WTC11 (cell line): ENCODE measurements at regions of chr2 and their contacts with region 1.

Region 1: GRCh38 chr2:45778720-45779171 is 127.3 kb downstream of the PRKCE start:
- DNase-seq: peak; percentile 72
- ATAC-seq: peak; percentile 83
- H3K4me3 Mint-ChIP-seq: no peak overlapping the region
- H3K27ac Mint-ChIP-seq: no peak overlapping the region
- H3K4me1 Mint-ChIP-seq: peaks cover 15% of the 10 kb centered on the region
- H3K27me3 Mint-ChIP-seq: no peaks in the 10 kb centered on the region
- CTCF ChIP-seq: peak; percentile 78

Region 2: GRCh38 chr2:45289997-45290709 is 488.6 kb before region 1 on chr2:
- CTCF ChIA-PET with region 1: no interaction called
- POLR2A ChIA-PET with region 1: no interaction called
- DNase-seq: no peak
- ATAC-seq: no peak
- H3K4me3 Mint-ChIP-seq: no peak overlapping the region
- H3K27ac Mint-ChIP-seq: no peak overlapping the region
- H3K4me1 Mint-ChIP-seq: peaks cover 7% of the 10 kb centered on the region
- H3K27me3 Mint-ChIP-seq: peaks cover 5% of the 10 kb centered on the region
- CTCF ChIP-seq: no peak

Region 3: GRCh38 chr2:45554073-45554741 is 224.5 kb before region 1 on chr2:
- CTCF ChIA-PET with region 1: no interaction called
- POLR2A ChIA-PET with region 1: no interaction called
- DNase-seq: no peak
- ATAC-seq: peak; percentile 51
- H3K4me3 Mint-ChIP-seq: no peak overlapping the region
- H3K27ac Mint-ChIP-seq: peak overlapping the region; percentile 62
- H3K4me1 Mint-ChIP-seq: peaks cover 24% of the 10 kb centered on the region
- H3K27me3 Mint-ChIP-seq: no peaks in the 10 kb centered on the region
- CTCF ChIP-seq: no peak

Region 4: DNA sequence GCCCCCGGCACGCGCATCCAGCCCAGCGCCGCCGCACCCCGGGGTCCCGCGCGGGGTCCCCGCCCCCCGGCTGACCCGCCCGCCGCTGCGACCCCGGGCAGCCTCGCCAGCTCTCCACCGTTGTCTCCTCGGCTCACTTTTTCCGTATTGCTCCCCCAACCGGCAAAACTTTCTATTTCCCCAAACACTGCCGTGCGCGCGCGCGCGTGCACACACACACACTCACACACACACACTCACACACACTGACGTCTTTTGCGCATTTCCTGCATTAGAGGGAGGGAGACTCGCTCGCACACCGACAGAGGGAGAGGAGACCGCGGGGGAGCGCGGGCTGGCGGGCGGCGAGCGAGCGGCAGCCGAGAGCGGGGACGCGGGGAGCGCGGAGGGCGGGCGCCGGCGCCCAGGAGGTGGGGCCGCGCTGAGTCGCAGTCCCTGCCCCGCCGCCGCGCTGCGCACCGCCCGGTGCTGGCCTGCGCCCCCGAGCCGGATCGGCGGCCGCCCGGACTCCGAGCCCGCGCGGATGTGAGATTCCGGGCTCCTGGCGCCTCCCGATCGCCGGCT is 127.8 kb before region 1 on chr2:
- CTCF ChIA-PET with region 1: interaction called, 15 read pairs
- POLR2A ChIA-PET with region 1: no interaction called
- DNase-seq: peak; percentile 82
- ATAC-seq: peak; percentile 69
- H3K4me3 Mint-ChIP-seq: peak overlapping the region; percentile 98
- H3K27ac Mint-ChIP-seq: peak overlapping the region; percentile 63; the same call in 1 of the 2 replicates
- H3K4me1 Mint-ChIP-seq: peaks cover 16% of the 10 kb centered on the region
- H3K27me3 Mint-ChIP-seq: peaks cover 79% of the 10 kb centered on the region
- CTCF ChIP-seq: no peak

Region 5: GRCh38 chr2:45699032-45699658 is 79.6 kb before region 1 on chr2:
- CTCF ChIA-PET with region 1: interaction called, 12 read pairs
- POLR2A ChIA-PET with region 1: no interaction called
- DNase-seq: no peak
- ATAC-seq: no peak
- H3K4me3 Mint-ChIP-seq: no peak overlapping the region
- H3K27ac Mint-ChIP-seq: no peak overlapping the region
- H3K4me1 Mint-ChIP-seq: peaks cover 8% of the 10 kb centered on the region
- H3K27me3 Mint-ChIP-seq: no peaks in the 10 kb centered on the region
- CTCF ChIP-seq: no peak

Region 6: DNA sequence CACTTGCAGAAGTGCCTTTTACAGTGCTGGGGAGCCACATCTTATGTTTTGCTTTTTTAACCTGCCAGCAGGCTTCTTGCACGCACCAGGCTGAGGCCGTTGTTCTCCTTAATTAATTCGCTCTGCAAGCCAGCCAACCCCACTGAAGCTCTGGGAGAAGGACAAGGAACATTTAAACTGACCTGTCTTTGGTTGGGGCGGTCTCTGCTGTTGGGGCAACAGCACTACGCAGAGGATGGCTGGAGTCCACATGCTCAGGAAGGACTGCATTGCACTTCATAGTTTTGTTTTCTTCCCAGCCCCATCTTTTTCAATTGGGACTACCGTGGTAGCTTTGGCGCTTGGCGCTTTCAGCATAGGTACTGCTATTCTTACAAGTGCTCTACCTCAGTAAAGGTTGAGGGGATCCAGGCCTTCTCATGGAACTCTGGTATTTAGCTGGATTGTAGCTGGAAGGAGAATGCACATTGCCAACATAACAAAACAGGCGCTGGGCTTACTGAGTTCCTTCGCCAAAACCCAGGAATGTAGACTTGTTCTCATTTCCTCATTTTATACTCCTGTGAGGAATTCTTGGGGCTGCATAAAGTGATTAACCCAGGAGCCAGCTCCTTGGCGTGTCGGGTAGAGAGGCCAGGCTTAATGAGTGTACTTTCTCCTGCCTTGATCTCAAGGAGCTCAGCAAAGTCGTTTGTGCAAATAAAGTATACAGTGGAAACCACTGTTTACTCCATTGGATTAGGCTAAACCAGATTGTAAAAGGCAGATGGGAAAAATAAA is 18.9 kb after region 1 on chr2:
- CTCF ChIA-PET with region 1: interaction called, 10 read pairs
- POLR2A ChIA-PET with region 1: no interaction called
- DNase-seq: no peak
- ATAC-seq: peak; percentile 59
- H3K4me3 Mint-ChIP-seq: no peak overlapping the region
- H3K27ac Mint-ChIP-seq: no peak overlapping the region
- H3K4me1 Mint-ChIP-seq: 0 out of 2 replicates have a peak, but pooled peaks cover 6% of the 10 kb centered on the region
- H3K27me3 Mint-ChIP-seq: no peaks in the 10 kb centered on the region
- CTCF ChIP-seq: no peak

Region 7: GRCh38 chr2:45833968-45834344 is 55.2 kb after region 1 on chr2:
- CTCF ChIA-PET with region 1: interaction called, 11 read pairs
- POLR2A ChIA-PET with region 1: no interaction called
- DNase-seq: no peak
- ATAC-seq: no peak
- H3K4me3 Mint-ChIP-seq: no peak overlapping the region
- H3K27ac Mint-ChIP-seq: no peak overlapping the region; the same call in 1 of the 2 replicates
- H3K4me1 Mint-ChIP-seq: peaks cover 18% of the 10 kb centered on the region
- H3K27me3 Mint-ChIP-seq: no peaks in the 10 kb centered on the region; the same call in 1 of the 2 replicates
- CTCF ChIP-seq: no peak

Region 8: DNA sequence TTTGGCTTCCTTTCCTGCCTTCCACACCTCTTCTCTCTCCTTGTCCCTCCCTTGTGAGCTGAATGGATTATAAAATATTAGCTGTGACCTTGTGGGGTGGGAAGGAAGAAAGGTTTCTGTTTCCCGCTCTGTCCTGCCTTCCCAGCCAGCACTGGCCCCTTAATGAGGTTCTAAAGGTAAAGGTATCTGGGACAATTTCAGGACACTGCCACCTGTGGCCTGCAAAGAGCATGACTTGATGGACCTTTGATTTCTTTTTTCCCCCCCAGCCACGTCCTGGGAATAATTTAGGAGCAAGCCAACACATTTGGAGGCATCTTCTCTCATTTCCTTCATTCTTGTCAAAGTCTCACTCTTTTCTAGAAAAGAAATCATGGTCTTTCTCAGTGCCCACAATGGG is 271.7 kb after region 1 on chr2:
- CTCF ChIA-PET with region 1: no interaction called
- POLR2A ChIA-PET with region 1: no interaction called
- DNase-seq: no peak
- ATAC-seq: peak; percentile 69
- H3K4me3 Mint-ChIP-seq: no peak overlapping the region
- H3K27ac Mint-ChIP-seq: no peak overlapping the region
- H3K4me1 Mint-ChIP-seq: peaks cover 3% of the 10 kb centered on the region; the same call in 1 of the 2 replicates
- H3K27me3 Mint-ChIP-seq: no peaks in the 10 kb centered on the region
- CTCF ChIP-seq: no peak